WTC11 (cell line): ENCODE measurements at regions of chr1 and their contacts with region 1.

Region 1: GRCh38 chr1:203267347-203267846 is 37.9 kb upstream of the BTG2 start:
- DNase-seq: peak; percentile 86
- ATAC-seq: peak; percentile 58
- H3K4me3 Mint-ChIP-seq: peak overlapping the region; percentile 76
- H3K27ac Mint-ChIP-seq: no peak overlapping the region; the same call in 1 of the 2 replicates
- H3K4me1 Mint-ChIP-seq: peaks cover 11% of the 10 kb centered on the region
- H3K27me3 Mint-ChIP-seq: peaks cover 10% of the 10 kb centered on the region
- CTCF ChIP-seq: peak; percentile 85

Region 2: DNA sequence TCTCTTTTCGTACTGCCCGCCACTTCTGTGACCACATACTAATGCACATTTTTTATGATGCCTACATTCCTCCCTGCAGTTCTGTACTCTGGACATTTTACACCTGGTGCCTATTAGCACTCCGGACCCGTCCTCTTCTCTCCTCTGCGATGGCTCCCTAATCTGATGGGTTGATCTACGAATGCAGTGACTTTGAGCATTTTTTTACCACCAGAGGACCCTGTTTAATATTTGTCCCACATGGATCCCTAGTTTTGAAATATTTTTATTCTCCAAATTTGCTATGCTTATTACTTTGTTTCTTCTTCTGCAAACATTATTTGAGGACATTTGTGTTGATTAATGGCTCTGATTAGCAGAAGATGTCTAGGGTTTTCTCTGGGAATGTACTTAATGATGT is 235.9 kb before region 1 on chr1:
- CTCF ChIA-PET with region 1: interaction called, 89 read pairs
- POLR2A ChIA-PET with region 1: no interaction called
- DNase-seq: no peak
- ATAC-seq: no peak
- H3K4me3 Mint-ChIP-seq: no peak overlapping the region
- H3K27ac Mint-ChIP-seq: no peak overlapping the region
- H3K4me1 Mint-ChIP-seq: peaks cover 27% of the 10 kb centered on the region
- H3K27me3 Mint-ChIP-seq: peaks cover 23% of the 10 kb centered on the region
- CTCF ChIP-seq: no peak

Region 3: DNA sequence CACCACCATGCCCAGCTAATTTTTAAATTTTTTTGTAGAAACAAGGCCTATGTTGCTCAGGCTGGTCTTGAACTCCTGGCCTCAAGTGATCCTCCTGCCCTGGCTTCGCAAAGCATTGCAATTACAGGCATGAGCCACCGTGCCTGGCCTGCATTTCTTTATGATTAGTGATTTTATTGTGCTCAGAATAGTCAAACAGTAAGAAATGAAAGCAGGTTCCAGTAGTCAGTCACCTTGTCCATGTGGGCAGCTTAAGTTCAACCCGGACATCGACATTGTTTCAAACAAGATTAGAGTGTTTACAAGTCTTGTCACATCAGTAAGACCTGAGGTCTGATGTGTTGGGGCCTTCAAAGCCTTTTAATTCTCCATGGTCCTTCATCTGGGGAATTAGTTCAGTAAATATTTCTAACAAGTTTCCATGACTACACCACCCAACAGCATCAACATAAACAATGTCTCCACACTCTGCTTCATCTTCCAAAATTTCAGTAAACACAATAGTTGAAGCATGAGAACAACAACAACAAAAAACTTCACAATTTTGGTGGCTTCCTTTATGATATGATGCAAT is 155.0 kb before region 1 on chr1:
- CTCF ChIA-PET with region 1: interaction called, 146 read pairs
- POLR2A ChIA-PET with region 1: interaction called, 3 read pairs
- DNase-seq: no peak
- ATAC-seq: no peak
- H3K4me3 Mint-ChIP-seq: no peak overlapping the region
- H3K27ac Mint-ChIP-seq: no peak overlapping the region
- H3K4me1 Mint-ChIP-seq: no peaks in the 10 kb centered on the region; the same call in 1 of the 2 replicates
- H3K27me3 Mint-ChIP-seq: peaks cover 17% of the 10 kb centered on the region
- CTCF ChIP-seq: no peak

Region 4: GRCh38 chr1:203172128-203173010 is 95.0 kb before region 1 on chr1:
- CTCF ChIA-PET with region 1: interaction called, 26 read pairs
- POLR2A ChIA-PET with region 1: no interaction called
- DNase-seq: peak; percentile 88
- ATAC-seq: peak; percentile 91
- H3K4me3 Mint-ChIP-seq: no peak overlapping the region
- H3K27ac Mint-ChIP-seq: no peak overlapping the region
- H3K4me1 Mint-ChIP-seq: peaks cover 11% of the 10 kb centered on the region
- H3K27me3 Mint-ChIP-seq: no peaks in the 10 kb centered on the region
- CTCF ChIP-seq: peak; percentile 96

Region 5: DNA sequence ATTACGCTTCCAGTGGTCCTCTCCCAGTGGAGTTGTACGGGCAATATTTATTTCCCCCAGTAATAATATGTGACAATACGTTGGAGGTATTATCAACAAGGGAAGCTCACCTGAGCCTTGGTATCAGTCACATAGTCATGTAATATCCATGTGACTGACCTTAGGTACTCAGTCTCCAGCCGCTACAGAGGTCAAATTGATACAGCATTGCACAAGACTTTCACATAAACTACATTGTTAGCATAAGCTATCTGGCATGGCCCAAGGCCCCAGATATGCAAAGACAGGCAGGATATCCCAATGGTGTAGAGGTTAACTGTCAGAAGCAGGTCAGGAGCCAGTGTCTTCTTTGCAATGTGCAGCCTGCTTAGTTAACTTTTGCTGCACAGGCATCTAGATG is 22.6 kb before region 1 on chr1:
- CTCF ChIA-PET with region 1: interaction called, 16 read pairs
- POLR2A ChIA-PET with region 1: no interaction called
- DNase-seq: no peak
- ATAC-seq: no peak
- H3K4me3 Mint-ChIP-seq: no peak overlapping the region
- H3K27ac Mint-ChIP-seq: no peak overlapping the region
- H3K4me1 Mint-ChIP-seq: no peaks in the 10 kb centered on the region
- H3K27me3 Mint-ChIP-seq: peaks cover 23% of the 10 kb centered on the region
- CTCF ChIP-seq: no peak

Region 6: DNA sequence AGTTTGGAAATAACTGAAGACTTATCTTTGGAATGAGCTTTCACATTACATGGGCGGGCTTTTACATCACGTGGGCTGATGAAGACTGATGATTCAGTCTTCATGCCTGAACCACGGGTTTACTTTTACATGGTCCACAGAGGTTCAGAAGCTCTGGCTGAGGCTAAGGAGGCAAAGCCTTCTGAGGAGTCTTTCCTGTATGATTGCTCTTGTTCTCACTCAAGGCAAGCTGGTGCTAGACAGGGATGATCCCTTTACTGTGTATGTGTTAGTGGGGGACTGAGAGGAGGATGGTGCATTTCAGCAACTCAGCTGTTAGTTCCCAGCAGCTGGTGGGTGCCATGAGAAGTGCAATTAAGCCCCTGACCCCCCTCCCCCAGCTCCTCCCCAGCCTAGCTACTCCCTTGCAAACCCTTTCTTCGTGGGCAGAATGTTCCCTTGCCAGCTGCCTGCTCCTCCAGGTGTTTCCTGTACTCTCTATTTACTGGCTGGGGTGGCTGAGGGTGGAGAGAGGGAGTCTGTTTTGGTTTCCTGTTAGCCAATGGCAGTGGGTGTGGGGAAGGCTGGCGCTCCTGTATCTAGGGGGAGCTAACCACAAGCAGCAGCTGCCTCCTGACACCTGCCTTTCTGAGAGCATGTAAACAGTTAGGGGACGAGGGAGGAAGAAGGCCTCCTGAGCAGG is 53.3 kb after region 1 on chr1:
- CTCF ChIA-PET with region 1: interaction called, 99 read pairs
- POLR2A ChIA-PET with region 1: no interaction called
- DNase-seq: peak; percentile 63
- ATAC-seq: peak; percentile 97
- H3K4me3 Mint-ChIP-seq: no peak overlapping the region
- H3K27ac Mint-ChIP-seq: no peak overlapping the region
- H3K4me1 Mint-ChIP-seq: peaks cover 36% of the 10 kb centered on the region
- H3K27me3 Mint-ChIP-seq: peaks cover 96% of the 10 kb centered on the region
- CTCF ChIP-seq: no peak

Region 7: DNA sequence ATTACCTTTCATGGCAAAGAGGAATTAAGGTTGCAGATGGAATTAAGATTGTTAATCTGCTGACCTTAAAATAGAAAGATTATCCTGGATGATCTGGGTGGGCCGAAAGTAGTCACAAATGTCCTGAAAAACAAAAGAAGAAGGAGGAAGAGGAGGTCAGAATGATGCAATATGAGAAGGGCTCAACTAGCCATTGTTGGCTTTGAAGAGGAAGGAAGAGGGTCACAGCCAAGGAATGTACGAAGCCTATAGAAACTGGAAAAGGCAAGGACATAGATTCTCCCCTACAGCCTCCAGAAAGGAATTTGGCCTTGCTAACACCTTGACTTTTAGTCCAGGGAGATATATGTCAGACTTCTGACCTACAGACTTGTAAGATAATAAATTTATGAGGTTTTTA is 122.9 kb after region 1 on chr1:
- CTCF ChIA-PET with region 1: no interaction called
- POLR2A ChIA-PET with region 1: no interaction called
- DNase-seq: no peak
- ATAC-seq: no peak
- H3K4me3 Mint-ChIP-seq: no peak overlapping the region
- H3K27ac Mint-ChIP-seq: no peak overlapping the region
- H3K4me1 Mint-ChIP-seq: no peaks in the 10 kb centered on the region
- H3K27me3 Mint-ChIP-seq: no peaks in the 10 kb centered on the region; the same call in 1 of the 2 replicates
- CTCF ChIP-seq: no peak

Region 8: DNA sequence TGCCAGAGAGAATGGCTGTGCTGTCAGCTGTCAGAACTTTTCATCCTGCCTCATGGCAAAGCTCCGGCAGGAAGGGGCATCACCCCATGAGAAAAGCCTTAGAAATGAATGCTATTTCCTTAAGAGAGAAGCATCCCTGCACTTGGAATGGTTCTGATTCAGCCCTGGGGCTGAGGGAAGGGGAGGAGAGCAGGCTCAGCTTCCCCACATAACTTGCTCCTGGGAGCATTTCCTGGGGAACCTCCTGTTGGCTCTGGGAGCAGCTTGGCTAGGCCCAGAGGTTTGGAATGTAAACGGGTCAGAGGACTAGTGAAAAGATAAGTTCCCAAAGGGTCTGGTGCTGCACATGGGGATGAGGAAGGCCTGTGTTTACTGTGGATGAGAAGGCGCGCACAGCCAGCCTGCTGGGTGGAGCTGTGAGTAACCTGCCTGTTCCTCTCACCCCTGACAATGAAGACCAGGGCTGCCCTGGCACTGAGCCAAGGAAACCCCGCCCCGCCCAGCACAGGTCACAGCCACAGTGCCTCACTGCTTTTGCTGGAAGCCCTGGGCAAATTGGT is 213.2 kb after region 1 on chr1:
- CTCF ChIA-PET with region 1: interaction called, 24 read pairs
- POLR2A ChIA-PET with region 1: no interaction called
- DNase-seq: peak; percentile 45
- ATAC-seq: peak; percentile 86
- H3K4me3 Mint-ChIP-seq: no peak overlapping the region
- H3K27ac Mint-ChIP-seq: no peak overlapping the region
- H3K4me1 Mint-ChIP-seq: peaks cover 23% of the 10 kb centered on the region
- H3K27me3 Mint-ChIP-seq: no peaks in the 10 kb centered on the region; the same call in 1 of the 2 replicates
- CTCF ChIP-seq: no peak